ENCODE measurements at regions of chr14 and their contacts with region 1.

Region 1: DNA sequence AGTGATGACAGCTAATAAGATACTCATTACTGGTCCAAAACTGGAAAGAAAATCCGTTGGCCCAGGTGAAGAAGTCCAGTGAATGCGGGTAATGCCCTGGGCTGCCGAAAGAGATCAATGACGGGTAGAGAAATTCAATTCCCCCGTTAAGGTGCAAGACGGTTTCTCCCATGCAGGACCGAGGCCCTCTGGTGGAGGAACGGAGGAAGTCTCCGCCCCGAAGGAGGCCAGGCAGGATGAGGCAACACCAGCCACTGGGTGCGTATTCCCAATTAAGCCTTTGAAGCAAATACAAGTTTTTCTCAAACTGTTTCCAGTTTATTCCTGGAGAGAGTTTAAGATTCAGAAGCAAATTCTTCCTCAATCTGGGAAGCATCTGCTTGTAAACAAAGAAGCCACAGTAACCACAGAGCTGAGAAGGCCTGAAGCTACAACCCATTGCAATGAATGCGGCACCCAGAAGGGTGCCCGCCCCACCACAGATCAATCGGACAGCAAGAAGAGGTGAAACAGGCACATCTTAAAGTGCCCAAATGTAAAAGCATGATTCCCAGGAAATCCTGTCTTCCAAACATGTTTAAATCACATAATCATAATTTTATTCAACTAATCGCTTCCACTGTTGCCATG is 118.5 kb downstream of the TTC7B start:
- DNase-seq: peak; percentile 75 to 93 (median 90)
- H3K4me3 ChIP-seq: peak overlapping the region in 36 of 59 donors; percentile 2 to 45 (median 24)
- H3K27ac ChIP-seq: peak overlapping the region; percentile 72 to 97 (median 91)
- H3K27me3 ChIP-seq: no peaks in the 10 kb centered on the region
- CTCF ChIP-seq: peak; percentile 89 to 99 (median 97)

Region 2: GRCh38 chr14:90213099-90213748 is 484.5 kb before region 1 on chr14:
- intact Hi-C with region 1: no loop called
- DNase-seq: no peak
- H3K4me3 ChIP-seq: no peak overlapping the region
- H3K27ac ChIP-seq: no peak overlapping the region
- H3K27me3 ChIP-seq: peaks cover 0 to 5% (median 0%) of the 10 kb centered on the region in 45 donors
- CTCF ChIP-seq: no peak

Region 3: GRCh38 chr14:90301668-90302090 is 396.0 kb before region 1 on chr14:
- intact Hi-C with region 1: loop called (anchors 5 kb)
- DNase-seq: no peak
- H3K4me3 ChIP-seq: peak overlapping the region in 13 of 59 donors; percentile 0 to 33 (median 11)
- H3K27ac ChIP-seq: peak overlapping the region; percentile 38 to 99 (median 92)
- H3K27me3 ChIP-seq: no peaks in the 10 kb centered on the region
- CTCF ChIP-seq: peak in 54 of 56 donors; percentile 55 to 88 (median 77)

Region 4: GRCh38 chr14:90454041-90455000 is 243.4 kb before region 1 on chr14:
- intact Hi-C with region 1: loop called in 1 of 2 experiments (anchors 5 kb)
- DNase-seq: peak; percentile 95 to 99 (median 98)
- H3K4me3 ChIP-seq: peak overlapping the region; percentile 17 to 75 (median 55)
- H3K27ac ChIP-seq: peak overlapping the region; percentile 83 to 100 (median 98)
- H3K27me3 ChIP-seq: no peaks in the 10 kb centered on the region
- CTCF ChIP-seq: peak in 41 of 56 donors; percentile 3 to 64 (median 30)

Region 5: GRCh38 chr14:90556012-90556477 is 141.6 kb before region 1 on chr14:
- intact Hi-C with region 1: loop called (anchors 5 to 10 kb)
- DNase-seq: peak in 6 of 10 donors; percentile 41 to 81 (median 59)
- H3K4me3 ChIP-seq: peak overlapping the region in 51 of 59 donors; percentile 1 to 53 (median 33)
- H3K27ac ChIP-seq: peak overlapping the region; percentile 76 to 99 (median 96)
- H3K27me3 ChIP-seq: no peaks in the 10 kb centered on the region
- CTCF ChIP-seq: no peak

Region 6: GRCh38 chr14:90608929-90609341 is 88.8 kb before region 1 on chr14:
- intact Hi-C with region 1: loop called in 1 of 2 experiments (anchors 5 kb)
- DNase-seq: no peak
- H3K4me3 ChIP-seq: peak overlapping the region in 1 of 59 donors; percentile 27
- H3K27ac ChIP-seq: peak overlapping the region in 56 of 59 donors; percentile 13 to 94 (median 72)
- H3K27me3 ChIP-seq: no peaks in the 10 kb centered on the region
- CTCF ChIP-seq: no peak

Region 7: GRCh38 chr14:90767899-90768298 is 70.2 kb after region 1 on chr14:
- intact Hi-C with region 1: no loop called
- DNase-seq: no peak
- H3K4me3 ChIP-seq: no peak overlapping the region
- H3K27ac ChIP-seq: no peak overlapping the region
- H3K27me3 ChIP-seq: no peaks in the 10 kb centered on the region
- CTCF ChIP-seq: no peak

Measured in dorsolateral prefrontal cortex (tissue), 120 donors.